ENCODE measurements at regions of chr2 and their contacts with region 1.

Region 1: DNA sequence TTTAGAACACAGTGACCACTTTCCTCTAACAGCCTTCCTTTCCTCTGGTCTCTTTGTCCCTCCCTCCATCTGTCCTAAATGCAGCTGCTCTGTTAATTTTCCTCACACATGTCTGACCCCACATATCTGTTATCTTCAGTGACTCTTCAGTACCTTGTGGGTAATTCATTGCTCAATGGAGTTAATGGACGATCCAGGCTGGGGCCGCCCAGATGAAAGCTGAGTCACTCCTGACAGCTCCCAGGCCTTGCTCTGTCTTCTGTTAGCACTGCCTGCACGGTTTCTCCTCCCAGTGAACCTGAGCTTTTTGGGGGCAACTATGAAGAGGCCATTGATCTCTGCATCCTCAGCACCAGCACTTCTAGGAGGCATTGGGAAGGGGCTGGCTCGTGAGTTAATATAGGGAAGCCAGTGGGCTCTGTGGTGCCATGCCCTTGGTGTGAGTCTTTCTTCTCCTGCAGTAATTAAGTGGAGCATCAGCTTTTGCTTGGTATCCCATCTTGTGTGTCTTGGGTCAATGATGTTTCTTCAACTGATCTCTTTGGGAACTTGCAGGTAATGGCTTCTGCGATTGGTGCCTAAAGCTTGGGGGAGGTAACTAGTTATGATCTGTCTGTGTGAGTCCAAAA is 67.3 kb downstream of the SNORC start:
- DNase-seq: no peak
- H3K4me3 ChIP-seq: no peak overlapping the region
- H3K27ac ChIP-seq: no peak overlapping the region
- H3K4me1 ChIP-seq: no peaks in the 10 kb centered on the region
- CTCF ChIP-seq: no peak

Region 2: DNA sequence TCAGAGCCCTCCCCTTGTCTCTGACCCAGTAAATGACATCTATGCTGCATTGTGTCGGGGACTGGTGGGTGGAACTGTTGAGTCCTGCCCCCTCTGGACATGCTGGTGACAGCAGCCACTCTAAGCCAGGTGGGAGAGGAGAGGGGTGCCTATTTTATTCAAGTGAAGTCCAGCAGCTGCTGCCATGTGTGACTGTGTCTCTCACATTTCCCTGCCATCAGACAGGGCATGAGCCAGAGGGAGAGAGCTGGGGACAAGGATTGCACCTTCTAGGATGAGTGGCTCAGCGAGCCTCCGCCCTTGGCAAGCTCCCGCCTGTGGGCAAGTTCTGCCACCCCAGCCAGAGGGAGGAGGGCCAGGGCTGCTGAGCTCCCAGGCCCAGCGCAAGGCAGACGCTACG is 62.0 kb after region 1 on chr2:
- CTCF ChIA-PET with region 1: no interaction called
- POLR2A ChIA-PET with region 1: no interaction called
- intact Hi-C with region 1: loop called (anchors 10 kb)
- DNase-seq: peak; percentile 13
- H3K4me3 ChIP-seq: no peak overlapping the region
- H3K27ac ChIP-seq: no peak overlapping the region
- H3K4me1 ChIP-seq: no peaks in the 10 kb centered on the region
- CTCF ChIP-seq: 0 out of 2 replicates have a peak, but pooled peaks have one; percentile 38

Region 3: GRCh38 chr2:233728723-233729301 is 791.4 kb after region 1 on chr2 and contains the start of gene UGT1A3:
- CTCF ChIA-PET with region 1: no interaction called
- POLR2A ChIA-PET with region 1: no interaction called
- intact Hi-C with region 1: loop called (anchors 5 kb)
- DNase-seq: no peak
- H3K4me3 ChIP-seq: no peak within 1 kb of the TSS
- H3K27ac ChIP-seq: no peak within 1 kb of the TSS
- H3K4me1 ChIP-seq: no peaks in the 10 kb centered on the region
- CTCF ChIP-seq: no peak
- total RNA-seq, gene UGT1A3: not detected in 2 replicates